Naive thymus-derived CD4-positive, alpha-beta T cell (primary cell): ENCODE measurements at regions of chr5 and their contacts with region 1.

Region 1: GRCh38 chr5:157812086-157812485 is 46.9 kb downstream of the CLINT1 start:
- DNase-seq: no peak
- ATAC-seq: no peak
- H3K4me3 ChIP-seq: no peak overlapping the region
- H3K4me3 Mint-ChIP-seq: no peak overlapping the region
- H3K27ac ChIP-seq: no peak overlapping the region
- H3K27ac Mint-ChIP-seq: peak overlapping the region in 1 of 9 donors; percentile 8
- H3K4me1 ChIP-seq: no peaks in the 10 kb centered on the region
- H3K4me1 Mint-ChIP-seq: peaks cover 0 to 6% (median 0%) of the 10 kb centered on the region in 7 donors
- H3K27me3 ChIP-seq: no peaks in the 10 kb centered on the region
- H3K27me3 Mint-ChIP-seq: no peaks in the 10 kb centered on the region

Region 2: DNA sequence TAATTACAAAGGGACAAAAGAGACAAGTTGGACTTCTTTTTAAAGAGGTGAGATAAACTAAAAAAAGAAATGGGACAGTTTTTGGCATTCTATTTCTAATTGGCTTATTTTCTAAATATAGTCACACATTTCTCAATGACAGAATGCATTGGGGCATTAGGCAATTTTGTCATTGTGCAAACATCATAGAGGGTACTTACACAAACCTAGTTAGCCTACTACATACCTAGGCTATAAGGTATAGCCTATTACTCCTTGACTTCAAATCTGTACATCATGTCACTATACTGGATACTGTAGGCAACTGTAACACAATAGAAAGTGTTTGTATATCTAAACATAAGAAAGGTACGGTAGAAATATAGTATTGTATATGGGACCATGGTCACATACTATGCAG is 12.5 kb before region 1 on chr5:
- CTCF ChIA-PET with region 1: interaction called, 5 read pairs
- POLR2A ChIA-PET with region 1: no interaction called
- intact Hi-C with region 1: loop called in 1 of 2 experiments (anchors 2 kb)
- DNase-seq: no peak
- ATAC-seq: no peak
- H3K4me3 ChIP-seq: no peak overlapping the region
- H3K4me3 Mint-ChIP-seq: no peak overlapping the region
- H3K27ac ChIP-seq: no peak overlapping the region
- H3K27ac Mint-ChIP-seq: no peak overlapping the region
- H3K4me1 ChIP-seq: no peaks in the 10 kb centered on the region
- H3K4me1 Mint-ChIP-seq: peaks cover 0 to 6% (median 0%) of the 10 kb centered on the region in 7 donors
- H3K27me3 ChIP-seq: no peaks in the 10 kb centered on the region
- H3K27me3 Mint-ChIP-seq: no peaks in the 10 kb centered on the region

Region 3: DNA sequence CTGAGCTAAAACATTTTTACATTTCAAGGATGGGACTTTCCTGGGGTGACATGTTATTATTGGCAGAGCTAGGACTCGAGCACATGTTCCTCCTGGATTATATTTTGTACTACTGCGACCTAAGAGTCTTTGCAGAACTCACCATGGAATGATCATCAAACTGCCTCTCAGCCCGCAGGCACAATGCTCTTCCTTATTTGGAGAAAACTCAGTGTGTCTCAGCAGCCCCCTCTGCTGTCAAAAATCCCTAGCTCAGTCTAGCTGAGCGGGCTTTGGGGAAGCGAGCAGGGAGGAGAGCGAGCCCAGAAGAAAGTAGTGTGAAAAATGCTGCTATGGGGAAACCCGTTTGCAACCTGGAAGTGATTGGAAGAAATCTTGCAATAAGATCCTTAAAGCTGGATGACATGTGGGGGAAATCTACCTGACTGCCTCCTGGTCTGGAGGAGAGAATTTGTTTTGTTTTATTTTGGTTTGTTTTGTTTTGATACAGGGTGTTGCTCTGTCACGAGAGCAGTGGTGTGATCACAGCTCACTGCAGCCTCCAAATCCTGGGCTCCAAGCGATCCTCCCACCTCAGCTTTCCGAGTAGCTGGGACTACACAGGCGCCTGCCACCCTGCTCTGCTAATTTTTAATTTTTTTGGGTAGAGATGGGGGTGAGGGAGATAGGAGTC is 136.8 kb after region 1 on chr5:
- CTCF ChIA-PET with region 1: interaction called, 36 read pairs
- POLR2A ChIA-PET with region 1: no interaction called
- intact Hi-C with region 1: loop called (anchors 1 kb)
- DNase-seq: peak; percentile 44 to 78 (median 69)
- ATAC-seq: peak; percentile 97
- H3K4me3 ChIP-seq: no peak overlapping the region
- H3K4me3 Mint-ChIP-seq: peak overlapping the region in 4 of 10 donors; percentile 1 to 44 (median 4)
- H3K27ac ChIP-seq: no peak overlapping the region
- H3K27ac Mint-ChIP-seq: no peak overlapping the region
- H3K4me1 ChIP-seq: no peaks in the 10 kb centered on the region
- H3K4me1 Mint-ChIP-seq: peaks cover 5 to 10% (median 6%) of the 10 kb centered on the region in 7 donors
- H3K27me3 ChIP-seq: no peaks in the 10 kb centered on the region
- H3K27me3 Mint-ChIP-seq: peaks cover 5 to 27% (median 9%) of the 10 kb centered on the region in 5 donors

Region 4: GRCh38 chr5:159782197-159782994 is 1970.3 kb after region 1 on chr5:
- CTCF ChIA-PET with region 1: no interaction called
- POLR2A ChIA-PET with region 1: no interaction called
- intact Hi-C with region 1: no loop called
- DNase-seq: no peak
- ATAC-seq: no peak
- H3K4me3 ChIP-seq: no peak overlapping the region
- H3K4me3 Mint-ChIP-seq: no peak overlapping the region
- H3K27ac ChIP-seq: no peak overlapping the region
- H3K27ac Mint-ChIP-seq: no peak overlapping the region
- H3K4me1 ChIP-seq: no peaks in the 10 kb centered on the region
- H3K4me1 Mint-ChIP-seq: peaks cover 0 to 5% (median 0%) of the 10 kb centered on the region in 7 donors
- H3K27me3 ChIP-seq: no peaks in the 10 kb centered on the region
- H3K27me3 Mint-ChIP-seq: peaks cover 9 to 15% (median 15%) of the 10 kb centered on the region in 5 donors